ENCODE measurements at regions of chr17 and their contacts with region 1.

Region 1: DNA sequence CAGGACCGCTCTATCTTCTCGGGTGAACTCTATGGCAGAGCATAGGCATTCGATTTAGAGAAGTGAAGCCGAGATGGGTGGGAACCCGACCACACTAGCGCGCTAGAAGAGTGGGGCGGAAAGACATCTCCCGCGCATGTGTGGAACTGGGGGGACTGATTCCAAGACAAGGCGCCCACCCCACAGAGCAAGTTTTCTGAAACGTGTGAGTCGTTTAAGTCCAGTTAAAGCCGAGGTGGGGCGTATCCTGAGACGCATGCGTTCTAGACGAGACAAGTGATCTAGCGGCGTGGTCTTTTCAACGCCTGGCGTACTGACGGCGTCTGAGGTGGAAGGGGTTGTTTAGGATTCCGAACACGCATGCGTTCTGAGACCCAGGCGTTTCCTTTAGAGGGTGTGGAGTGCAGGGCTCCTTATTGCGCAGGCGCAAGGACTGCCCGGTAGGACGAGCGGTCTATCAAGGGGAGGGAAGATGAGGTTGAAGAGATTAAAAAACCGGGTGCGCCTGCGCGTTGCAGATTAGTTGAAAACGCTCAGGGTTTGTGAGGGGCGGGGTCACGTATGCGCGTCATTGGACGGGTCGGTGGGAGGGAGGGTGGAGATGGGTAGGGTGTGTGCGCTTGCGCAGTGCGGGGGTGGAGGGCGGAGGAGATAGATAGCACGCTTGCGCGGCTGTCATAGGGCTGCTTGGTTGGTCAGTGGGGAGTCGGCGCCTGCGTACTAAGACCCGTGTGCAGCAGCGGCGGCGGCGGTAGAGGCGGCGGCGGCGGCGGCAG is at the start of gene EIF5A:
- DNase-seq: peak; percentile 100
- H3K4me3 Mint-ChIP-seq: peak within 1 kb of the TSS; percentile 86
- H3K27ac Mint-ChIP-seq: peak within 1 kb of the TSS; percentile 96
- H3K4me1 Mint-ChIP-seq: peaks cover 35% of the 10 kb centered on the region
- H3K27me3 Mint-ChIP-seq: no peaks in the 10 kb centered on the region
- total RNA-seq, gene EIF5A: 757 to 792 TPM

Region 2: DNA sequence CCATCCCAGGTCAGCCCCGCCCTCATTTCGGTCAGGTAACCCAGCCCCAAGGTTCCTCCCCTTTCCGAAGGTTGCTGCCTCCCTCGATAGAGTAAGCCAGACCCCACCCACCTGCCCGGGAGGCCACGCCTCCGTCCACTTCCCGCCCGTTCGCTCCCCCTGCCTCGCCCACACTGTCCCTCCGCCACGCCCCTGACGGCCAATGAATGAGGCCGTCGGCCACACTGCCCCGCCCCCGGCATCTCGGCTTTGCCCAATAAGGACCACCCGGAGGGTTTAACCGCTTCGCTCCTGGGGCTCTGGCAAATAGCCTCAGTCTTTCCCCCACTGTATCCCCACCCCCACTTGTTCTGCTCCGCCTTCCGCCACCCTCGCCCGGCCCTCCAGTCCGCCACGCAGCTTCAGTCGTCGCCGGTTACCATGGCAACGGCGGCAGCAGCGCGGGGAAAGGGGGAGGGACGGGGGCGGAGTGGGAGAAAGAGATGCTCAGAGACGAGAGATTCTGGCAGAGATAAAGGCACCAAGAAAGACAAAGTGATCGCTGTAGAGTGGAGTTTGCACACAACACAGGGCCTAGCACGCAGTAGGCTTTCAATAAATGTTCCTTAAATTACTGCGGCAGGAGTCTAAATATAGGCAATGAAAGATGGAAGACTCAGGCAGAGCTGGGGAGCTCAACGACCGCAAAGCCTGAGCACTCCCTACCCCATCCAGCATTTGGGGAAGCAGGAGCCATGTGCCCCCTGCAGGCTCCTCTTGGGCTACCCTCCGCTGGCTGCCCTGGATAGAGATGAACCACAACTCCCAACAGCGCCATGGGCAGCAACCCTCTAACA is 92.6 kb before region 1 on chr17:
- CTCF ChIA-PET with region 1: interaction called, 5 read pairs
- intact Hi-C with region 1: loop called (anchors 2 kb)
- DNase-seq: peak; percentile 100
- H3K4me3 Mint-ChIP-seq: peak overlapping the region; percentile 88
- H3K27ac Mint-ChIP-seq: peak overlapping the region; percentile 92
- H3K4me1 Mint-ChIP-seq: peaks cover 52% of the 10 kb centered on the region
- H3K27me3 Mint-ChIP-seq: no peaks in the 10 kb centered on the region

Region 3: DNA sequence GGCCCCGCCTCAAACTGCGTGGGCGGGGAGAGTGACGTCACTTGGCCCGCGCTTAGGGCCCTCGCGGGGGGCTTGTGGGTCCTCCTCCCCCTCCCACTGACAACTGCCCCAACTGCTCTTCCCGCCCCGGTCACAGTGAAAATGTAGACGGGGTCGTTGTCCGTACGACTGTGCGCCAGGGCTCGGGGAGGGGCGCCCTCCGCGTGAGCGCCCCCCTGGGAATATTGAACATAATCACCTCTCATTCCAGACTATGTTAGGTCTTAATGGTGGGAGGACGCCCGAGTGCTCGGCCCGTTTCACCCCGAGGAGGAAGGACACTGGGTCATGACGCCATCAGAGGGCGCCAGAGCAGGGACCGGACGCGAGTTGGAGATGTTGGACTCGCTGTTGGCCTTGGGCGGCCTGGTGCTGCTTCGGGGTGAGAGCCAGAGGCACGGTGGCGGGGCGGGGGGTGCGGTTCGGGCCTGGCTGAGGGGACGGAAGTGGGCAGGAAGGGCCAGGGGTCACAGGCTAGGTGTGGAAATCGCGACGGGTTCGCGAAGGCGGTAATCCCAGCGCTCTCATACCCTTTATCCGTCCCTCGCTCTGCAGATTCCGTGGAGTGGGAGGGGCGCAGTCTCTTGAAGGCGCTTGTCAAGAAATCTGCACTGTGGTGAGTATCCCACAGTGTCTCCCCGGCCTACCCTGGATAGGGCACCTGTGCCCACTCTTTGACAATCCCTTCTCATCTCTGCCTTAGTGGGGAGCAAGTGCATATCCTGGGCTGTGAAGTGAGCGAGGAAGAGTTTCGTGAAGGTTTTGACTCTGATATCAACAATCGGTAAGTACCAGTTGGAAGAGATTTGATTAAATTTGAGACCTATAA is 54.7 kb before region 1 on chr17 and contains the start of gene ELP5:
- CTCF ChIA-PET with region 1: no interaction called
- intact Hi-C with region 1: loop called (anchors 1 kb)
- DNase-seq: peak; percentile 93
- H3K4me3 Mint-ChIP-seq: peak within 1 kb of the TSS; percentile 86
- H3K27ac Mint-ChIP-seq: peak within 1 kb of the TSS; percentile 99
- H3K4me1 Mint-ChIP-seq: peaks cover 34% of the 10 kb centered on the region
- H3K27me3 Mint-ChIP-seq: no peaks in the 10 kb centered on the region
- total RNA-seq, gene ELP5: 52.4 to 53.5 TPM

Region 4: DNA sequence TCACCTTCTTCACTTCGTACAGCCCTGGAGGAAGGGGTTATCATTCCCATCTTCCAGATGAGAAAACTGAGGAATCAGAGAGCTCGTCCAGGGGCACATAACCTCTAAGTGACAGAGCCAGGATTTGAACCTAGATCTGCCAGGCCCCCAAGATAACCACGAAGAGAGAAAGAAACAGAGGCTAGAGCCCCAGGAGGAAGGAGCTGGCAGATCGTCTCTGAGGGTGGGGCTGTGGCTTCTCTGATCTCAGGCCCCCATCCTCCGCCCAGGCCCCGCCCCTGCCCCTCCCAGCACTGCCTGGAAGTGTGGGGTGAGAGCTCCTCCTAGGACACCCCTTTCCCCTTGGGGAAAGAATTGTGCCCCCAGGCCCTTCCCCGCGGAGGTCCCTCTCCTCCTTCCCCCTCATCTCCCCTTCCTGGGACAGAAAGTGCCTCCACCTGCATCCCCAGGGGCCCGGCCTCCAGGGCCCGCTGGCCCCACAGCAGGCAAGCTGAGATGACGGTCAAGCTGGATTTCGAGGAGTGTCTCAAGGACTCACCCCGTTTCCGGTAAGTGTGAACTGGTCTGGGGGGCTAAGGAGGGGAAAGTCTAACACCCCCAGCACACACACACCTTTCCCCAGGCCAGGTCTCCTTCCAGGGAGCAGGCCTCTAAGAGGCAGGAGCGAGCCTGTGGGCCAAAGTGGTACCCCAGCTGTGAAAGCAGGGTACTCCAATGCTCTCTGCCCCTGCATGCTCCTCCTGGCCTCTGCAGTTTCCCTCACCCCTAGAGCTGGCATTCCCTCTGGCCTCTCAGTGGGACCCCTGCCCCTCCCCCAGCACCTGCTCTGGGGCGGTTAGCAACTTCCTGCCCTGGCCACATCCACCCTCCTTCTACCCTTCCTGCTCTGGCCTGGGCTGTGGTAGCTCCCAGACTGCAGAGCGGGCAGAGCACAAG is 29.4 kb after region 1 on chr17 and contains the start of gene ACAP1:
- CTCF ChIA-PET with region 1: interaction called, 4 read pairs
- intact Hi-C with region 1: loop called (anchors 1 kb)
- DNase-seq: peak; percentile 95
- H3K4me3 Mint-ChIP-seq: peak within 1 kb of the TSS; percentile 96
- H3K27ac Mint-ChIP-seq: peak within 1 kb of the TSS; percentile 98
- H3K4me1 Mint-ChIP-seq: peaks cover 59% of the 10 kb centered on the region
- H3K27me3 Mint-ChIP-seq: no peaks in the 10 kb centered on the region
- total RNA-seq, gene ACAP1: 309 to 320 TPM

Region 5: DNA sequence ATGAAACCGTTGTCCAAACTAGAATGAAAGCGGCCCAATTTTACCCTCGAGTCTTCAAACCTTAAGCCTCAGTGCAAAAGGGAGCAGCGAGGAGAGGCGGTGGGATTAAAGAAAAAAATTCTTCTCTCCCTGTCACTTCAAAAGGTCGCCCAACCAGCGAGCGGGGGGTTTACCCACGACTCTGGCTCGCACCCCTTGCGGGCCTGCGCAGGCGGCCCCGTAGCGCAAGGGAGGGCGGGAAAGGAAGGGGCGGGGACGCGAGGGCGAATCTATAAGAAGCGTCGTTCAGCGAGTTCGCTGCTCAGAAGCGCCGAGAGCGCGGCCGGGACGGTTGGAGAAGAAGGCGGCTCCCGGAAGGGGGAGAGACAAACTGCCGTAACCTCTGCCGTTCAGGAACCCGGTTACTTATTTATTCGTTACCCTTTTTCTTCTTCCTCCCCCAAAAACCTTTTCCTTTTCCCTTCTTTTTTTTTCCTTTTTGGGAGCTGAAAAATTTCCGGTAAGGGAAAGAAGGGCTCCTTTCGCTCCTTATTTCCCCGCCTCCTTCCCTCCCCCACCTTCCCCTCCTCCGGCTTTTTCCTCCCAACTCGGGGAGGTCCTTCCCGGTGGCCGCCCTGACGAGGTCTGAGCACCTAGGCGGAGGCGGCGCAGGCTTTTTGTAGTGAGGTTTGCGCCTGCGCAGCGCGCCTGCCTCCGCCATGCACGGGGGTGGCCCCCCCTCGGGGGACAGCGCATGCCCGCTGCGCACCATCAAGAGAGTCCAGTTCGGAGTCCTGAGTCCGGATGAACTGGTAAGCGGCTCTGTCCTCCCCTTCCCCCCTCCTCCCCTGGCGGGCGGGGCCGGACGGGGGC is 177.2 kb after region 1 on chr17 and contains the start of gene POLR2A:
- CTCF ChIA-PET with region 1: no interaction called
- intact Hi-C with region 1: loop called (anchors 2 kb)
- DNase-seq: peak; percentile 95
- H3K4me3 Mint-ChIP-seq: peak within 1 kb of the TSS; percentile 93
- H3K27ac Mint-ChIP-seq: peak within 1 kb of the TSS; percentile 100
- H3K4me1 Mint-ChIP-seq: peaks cover 70% of the 10 kb centered on the region
- H3K27me3 Mint-ChIP-seq: no peaks in the 10 kb centered on the region
- total RNA-seq, gene POLR2A: 204 to 205 TPM

Region 6: GRCh38 chr17:7614422-7615264 is 307.5 kb after region 1 on chr17 and contains the start of gene FXR2:
- CTCF ChIA-PET with region 1: no interaction called
- intact Hi-C with region 1: loop called (anchors 1 kb)
- DNase-seq: peak; percentile 100
- H3K4me3 Mint-ChIP-seq: peak within 1 kb of the TSS; percentile 83
- H3K27ac Mint-ChIP-seq: peak within 1 kb of the TSS; percentile 84
- H3K4me1 Mint-ChIP-seq: peaks cover 32% of the 10 kb centered on the region
- H3K27me3 Mint-ChIP-seq: no peaks in the 10 kb centered on the region
- total RNA-seq, gene FXR2: 29.7 to 36.8 TPM

Region 7: GRCh38 chr17:7887482-7888183 is 580.5 kb after region 1 on chr17:
- CTCF ChIA-PET with region 1: no interaction called
- intact Hi-C with region 1: loop called (anchors 1 kb)
- DNase-seq: peak; percentile 96
- H3K4me3 Mint-ChIP-seq: no peak overlapping the region
- H3K27ac Mint-ChIP-seq: no peak overlapping the region
- H3K4me1 Mint-ChIP-seq: peaks cover 5% of the 10 kb centered on the region
- H3K27me3 Mint-ChIP-seq: no peaks in the 10 kb centered on the region

Measured in activated naive CD4-positive, alpha-beta T cell treated with anti-CD3 and anti-CD28 coated beads for 36 hours (primary cell).